Activated CD8-positive, alpha-beta T cell treated with anti-CD3 and anti-CD28 coated beads, Interleukin-2, amount 10 ng/mL, durations not matched to agents 7 days and 5 days (primary cell): ENCODE measurements at regions of chr19 and their contacts with region 1.

Region 1: GRCh38 chr19:33176670-33177416 is 17.3 kb upstream of the LRP3 start:
- DNase-seq: peak; percentile 96
- ATAC-seq: peak; percentile 86
- H3K4me3 Mint-ChIP-seq: peak overlapping the region; percentile 95
- H3K27ac Mint-ChIP-seq: peak overlapping the region; percentile 96
- H3K4me1 Mint-ChIP-seq: peaks cover 30% of the 10 kb centered on the region
- H3K27me3 Mint-ChIP-seq: peaks cover 6% of the 10 kb centered on the region

Region 2: DNA sequence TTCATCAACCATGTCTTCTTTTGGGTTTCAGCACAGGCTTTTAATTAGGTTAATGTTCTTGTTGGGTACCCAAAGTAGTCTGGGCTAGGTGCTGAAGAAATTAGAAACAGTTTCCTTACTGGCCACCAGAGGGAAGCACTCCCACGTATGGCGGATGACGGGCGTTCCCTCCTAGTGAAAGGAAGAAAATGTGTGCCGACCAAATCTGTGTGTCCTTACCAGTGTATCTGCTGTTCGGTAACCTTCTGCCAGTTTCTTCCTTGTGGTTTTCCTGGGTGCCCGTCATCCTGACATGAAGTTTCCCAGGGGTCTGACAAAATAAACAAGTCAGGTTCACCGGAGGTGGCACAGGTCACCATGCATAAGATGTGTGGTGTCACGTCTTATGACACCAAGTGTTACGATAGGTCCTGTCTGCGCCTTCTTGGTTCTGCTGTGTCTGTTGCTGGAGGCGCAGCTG is 50.9 kb before region 1 on chr19:
- CTCF ChIA-PET with region 1: interaction called, 18 read pairs
- POLR2A ChIA-PET with region 1: interaction called, 10 read pairs
- DNase-seq: peak; percentile 74
- ATAC-seq: peak; percentile 88
- H3K4me3 Mint-ChIP-seq: no peak overlapping the region
- H3K27ac Mint-ChIP-seq: no peak overlapping the region
- H3K4me1 Mint-ChIP-seq: peaks cover 13% of the 10 kb centered on the region
- H3K27me3 Mint-ChIP-seq: no peaks in the 10 kb centered on the region

Region 3: GRCh38 chr19:33143897-33144405 is 32.9 kb before region 1 on chr19:
- CTCF ChIA-PET with region 1: interaction called, 37 read pairs
- POLR2A ChIA-PET with region 1: interaction called, 5 read pairs
- DNase-seq: peak; percentile 75
- ATAC-seq: peak; percentile 98
- H3K4me3 Mint-ChIP-seq: no peak overlapping the region
- H3K27ac Mint-ChIP-seq: no peak overlapping the region
- H3K4me1 Mint-ChIP-seq: peaks cover 7% of the 10 kb centered on the region
- H3K27me3 Mint-ChIP-seq: peaks cover 9% of the 10 kb centered on the region

Region 4: GRCh38 chr19:33156334-33156733 is 20.5 kb before region 1 on chr19:
- CTCF ChIA-PET with region 1: interaction called, 58 read pairs
- POLR2A ChIA-PET with region 1: interaction called, 62 read pairs
- DNase-seq: no peak
- ATAC-seq: no peak
- H3K4me3 Mint-ChIP-seq: no peak overlapping the region
- H3K27ac Mint-ChIP-seq: no peak overlapping the region
- H3K4me1 Mint-ChIP-seq: peaks cover 38% of the 10 kb centered on the region
- H3K27me3 Mint-ChIP-seq: peaks cover 7% of the 10 kb centered on the region

Region 5: GRCh38 chr19:33163481-33163880 is 13.4 kb before region 1 on chr19:
- CTCF ChIA-PET with region 1: interaction called, 58 read pairs
- POLR2A ChIA-PET with region 1: interaction called, 62 read pairs
- DNase-seq: no peak
- ATAC-seq: no peak
- H3K4me3 Mint-ChIP-seq: no peak overlapping the region
- H3K27ac Mint-ChIP-seq: no peak overlapping the region
- H3K4me1 Mint-ChIP-seq: peaks cover 32% of the 10 kb centered on the region
- H3K27me3 Mint-ChIP-seq: no peaks in the 10 kb centered on the region

Region 6: GRCh38 chr19:33226550-33227241 is 49.9 kb after region 1 on chr19:
- CTCF ChIA-PET with region 1: no interaction called
- POLR2A ChIA-PET with region 1: no interaction called
- DNase-seq: no peak
- ATAC-seq: peak; percentile 56
- H3K4me3 Mint-ChIP-seq: no peak overlapping the region
- H3K27ac Mint-ChIP-seq: no peak overlapping the region
- H3K4me1 Mint-ChIP-seq: no peaks in the 10 kb centered on the region
- H3K27me3 Mint-ChIP-seq: peaks cover 56% of the 10 kb centered on the region

Region 7: DNA sequence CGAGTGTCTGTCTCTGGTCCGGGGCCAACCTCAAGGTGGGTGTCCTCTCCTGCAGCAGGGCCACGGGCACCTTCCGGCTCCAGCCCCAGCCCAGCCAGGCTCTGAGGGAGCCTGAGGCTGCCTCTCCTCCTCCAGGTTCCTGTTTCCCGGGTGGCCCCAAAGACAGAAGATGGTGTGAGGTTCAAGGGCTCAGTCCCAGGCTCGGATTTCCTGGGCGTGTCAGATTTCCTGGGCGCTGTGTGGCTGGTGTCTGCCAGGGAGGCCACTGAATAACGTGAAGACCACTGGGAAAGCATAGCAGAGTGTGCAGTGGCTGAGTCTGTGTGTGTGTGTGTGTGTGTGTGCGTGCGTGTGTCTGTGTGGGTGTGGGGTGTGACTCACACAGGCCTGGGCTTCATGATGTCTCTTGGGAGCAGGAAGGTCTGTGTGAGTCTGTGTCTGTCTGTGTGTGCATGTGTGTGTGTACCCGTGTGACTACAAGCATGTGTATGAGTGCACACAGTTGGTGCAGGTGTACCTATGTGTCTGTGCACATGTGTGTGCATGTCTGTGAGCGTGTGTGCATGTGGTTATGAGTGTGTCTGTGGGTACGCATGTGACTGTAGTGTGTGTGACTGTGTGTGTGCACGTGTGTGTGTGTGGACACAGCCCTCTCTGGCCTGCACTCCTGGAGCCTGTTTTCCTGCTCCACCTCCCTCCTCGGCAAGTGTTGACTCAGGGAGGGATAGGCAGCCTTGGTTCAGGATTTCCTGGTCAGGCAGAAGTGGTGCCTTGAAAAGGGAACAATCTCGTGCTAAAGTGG is 97.2 kb after region 1 on chr19:
- CTCF ChIA-PET with region 1: no interaction called
- POLR2A ChIA-PET with region 1: no interaction called
- DNase-seq: peak; percentile 33
- ATAC-seq: no peak
- H3K4me3 Mint-ChIP-seq: no peak overlapping the region
- H3K27ac Mint-ChIP-seq: peak overlapping the region; percentile 39
- H3K4me1 Mint-ChIP-seq: peaks cover 5% of the 10 kb centered on the region
- H3K27me3 Mint-ChIP-seq: no peaks in the 10 kb centered on the region